Activated CD4-positive, alpha-beta T cell treated with anti-CD3 and anti-CD28 coated beads for 36 hours (primary cell): ENCODE measurements at regions of chr4 and their contacts with region 1.

Region 1: DNA sequence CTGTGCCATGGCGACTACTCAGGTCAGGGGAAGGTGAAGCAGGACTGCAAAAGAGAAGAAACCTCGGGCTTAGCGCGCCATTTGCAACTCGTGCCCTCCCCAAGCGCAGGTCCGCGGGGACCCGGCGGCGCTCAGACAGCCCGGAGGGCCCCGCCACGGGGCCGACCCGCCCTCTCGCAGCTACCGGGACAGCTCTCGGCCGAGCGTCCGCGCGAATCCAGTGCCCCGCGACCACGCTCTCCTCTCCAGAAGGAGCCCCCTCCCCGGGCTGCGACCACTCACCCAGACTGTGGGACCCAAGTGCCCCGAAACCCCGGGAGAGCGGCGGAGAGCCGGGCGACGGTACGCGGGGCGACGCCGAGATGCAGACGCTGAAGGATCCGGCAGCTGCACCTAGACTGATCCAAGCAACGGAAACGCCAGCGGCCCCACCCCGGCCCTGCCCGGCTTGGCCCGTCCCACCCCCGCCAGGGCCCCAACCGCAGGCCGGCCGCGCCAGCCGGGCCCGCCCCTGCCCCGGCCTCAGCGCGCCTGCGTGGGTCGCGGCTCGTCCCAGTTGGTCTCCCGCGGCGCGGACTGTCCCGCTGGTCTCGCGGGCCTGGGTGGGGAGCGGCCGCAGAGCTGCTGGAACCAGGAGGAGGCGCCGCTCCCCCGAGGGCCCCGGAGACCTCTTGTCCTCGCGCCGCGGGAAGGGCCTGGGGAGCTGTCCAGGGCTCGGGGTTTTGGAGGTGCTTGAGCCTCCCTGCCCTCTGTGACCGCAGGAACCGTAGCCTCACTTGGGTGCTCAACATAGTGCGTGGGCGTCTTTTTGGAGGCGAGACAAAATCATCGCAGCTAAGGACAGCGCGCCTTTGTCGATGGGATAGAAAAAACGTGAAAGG is at the start of gene ANXA5:
- DNase-seq: peak; percentile 86
- ATAC-seq: peak; percentile 87
- H3K4me3 Mint-ChIP-seq: peak within 1 kb of the TSS; percentile 95
- H3K27ac Mint-ChIP-seq: peak within 1 kb of the TSS; percentile 99
- H3K4me1 Mint-ChIP-seq: peaks cover 41% of the 10 kb centered on the region
- H3K27me3 Mint-ChIP-seq: peaks cover 26% of the 10 kb centered on the region
- total RNA-seq, gene ANXA5: 105 to 117 TPM

Region 2: DNA sequence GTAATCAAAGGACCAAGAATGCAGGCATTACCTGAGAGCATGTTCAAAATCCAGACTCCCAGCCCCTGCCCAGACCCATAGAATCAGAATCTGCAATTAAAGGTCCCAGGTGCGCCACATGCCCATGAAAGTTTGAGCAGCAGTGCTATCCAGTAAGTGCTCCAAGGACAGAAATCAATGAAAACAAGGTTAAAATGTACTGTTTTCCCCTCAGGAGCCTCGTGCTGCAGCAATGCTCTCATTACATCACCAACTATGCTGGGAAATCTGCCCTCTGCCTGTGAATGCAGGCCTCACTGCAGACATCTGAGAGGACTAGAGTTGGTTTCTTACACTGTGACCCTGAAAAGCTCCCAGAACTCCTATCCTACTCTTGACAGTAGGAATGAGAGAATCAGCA is 21.1 kb before region 1 on chr4:
- CTCF ChIA-PET with region 1: no interaction called
- POLR2A ChIA-PET with region 1: no interaction called
- intact Hi-C with region 1: no loop called
- DNase-seq: no peak
- ATAC-seq: no peak
- H3K4me3 Mint-ChIP-seq: no peak overlapping the region
- H3K27ac Mint-ChIP-seq: no peak overlapping the region
- H3K4me1 Mint-ChIP-seq: no peaks in the 10 kb centered on the region
- H3K27me3 Mint-ChIP-seq: no peaks in the 10 kb centered on the region

Region 3: GRCh38 chr4:121711263-121712000 is 14.6 kb after region 1 on chr4:
- CTCF ChIA-PET with region 1: interaction called, 7 read pairs
- POLR2A ChIA-PET with region 1: no interaction called
- intact Hi-C with region 1: loop called (anchors 1 kb)
- DNase-seq: peak; percentile 74
- ATAC-seq: peak; percentile 40
- H3K4me3 Mint-ChIP-seq: no peak overlapping the region
- H3K27ac Mint-ChIP-seq: no peak overlapping the region
- H3K4me1 Mint-ChIP-seq: peaks cover 29% of the 10 kb centered on the region
- H3K27me3 Mint-ChIP-seq: peaks cover 40% of the 10 kb centered on the region

Region 4: DNA sequence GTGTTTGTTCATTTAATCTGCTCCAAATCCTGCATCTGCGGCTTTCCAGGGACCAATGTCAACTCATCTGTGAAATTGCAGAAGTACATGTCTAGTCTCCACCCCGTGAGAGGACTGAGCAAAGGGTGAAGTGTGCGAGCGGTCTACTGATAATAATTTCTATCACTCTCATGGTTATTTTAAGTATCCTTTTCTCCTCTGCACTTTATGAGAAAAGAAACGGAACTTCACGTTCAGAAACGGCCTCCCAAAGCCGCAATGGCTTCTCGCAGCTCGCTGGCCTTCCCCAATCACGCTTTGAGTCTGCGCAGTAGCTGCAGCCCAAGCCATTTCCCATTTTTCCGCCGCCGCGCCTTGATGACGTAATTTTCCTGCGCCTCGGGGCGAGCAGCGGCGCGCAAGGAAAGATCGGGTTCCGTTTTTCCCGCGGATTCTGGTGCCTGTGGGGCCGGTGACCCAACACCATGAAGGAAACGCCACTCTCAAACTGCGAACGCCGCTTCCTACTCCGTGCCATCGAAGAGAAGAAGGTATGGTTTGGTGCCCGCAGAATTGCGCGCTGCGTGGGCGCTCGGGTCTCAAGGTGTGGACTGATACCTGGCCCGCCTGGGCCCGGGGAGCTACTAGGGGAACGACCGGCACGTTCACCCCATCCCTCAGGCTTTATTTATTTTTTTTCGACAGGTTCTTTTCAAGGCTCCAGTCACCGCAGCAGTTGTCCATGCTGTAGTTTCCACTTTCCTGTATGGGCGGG is 104.3 kb after region 1 on chr4 and contains the start of gene EXOSC9:
- CTCF ChIA-PET with region 1: no interaction called
- POLR2A ChIA-PET with region 1: no interaction called
- intact Hi-C with region 1: loop called (anchors 1 to 2 kb)
- DNase-seq: peak; percentile 95
- ATAC-seq: peak; percentile 85
- H3K4me3 Mint-ChIP-seq: peak within 1 kb of the TSS; percentile 93
- H3K27ac Mint-ChIP-seq: peak within 1 kb of the TSS; percentile 99
- H3K4me1 Mint-ChIP-seq: peaks cover 45% of the 10 kb centered on the region
- H3K27me3 Mint-ChIP-seq: no peaks in the 10 kb centered on the region
- total RNA-seq, gene EXOSC9: 85.4 to 94.5 TPM

Region 5: DNA sequence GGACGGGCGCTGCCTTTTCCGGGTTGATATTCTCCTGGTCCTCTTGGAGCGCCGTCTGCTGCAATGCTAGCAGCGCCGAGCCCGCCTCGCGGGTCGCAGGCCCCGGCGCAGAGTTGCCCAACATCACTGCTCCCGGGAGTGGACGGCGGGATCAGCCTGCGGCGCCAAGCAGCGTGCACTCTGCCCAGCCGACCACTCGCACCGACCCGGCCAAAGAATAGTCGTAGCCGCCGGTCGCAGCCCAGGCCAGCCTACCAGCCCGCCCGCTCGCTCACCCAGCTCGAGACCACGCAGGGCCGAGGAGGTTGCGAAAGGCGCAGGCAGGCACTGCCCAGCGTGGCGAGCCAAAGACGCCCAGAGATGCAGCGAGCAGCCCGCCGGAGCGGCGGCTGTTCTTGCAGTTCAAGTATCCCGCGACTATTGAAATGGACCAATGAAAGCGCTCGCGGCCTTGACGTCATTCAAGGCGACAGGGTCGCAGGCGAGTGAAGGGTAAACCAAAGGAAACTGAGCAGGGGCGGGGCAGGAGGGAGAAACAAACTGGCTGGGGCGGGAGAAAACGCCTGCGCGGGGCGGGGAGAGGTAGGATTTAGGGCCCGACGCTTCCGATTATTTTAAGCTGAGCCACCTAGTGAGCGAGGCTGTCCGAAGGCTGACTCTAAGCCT is 126.8 kb after region 1 on chr4 and contains the start of gene CCNA2:
- CTCF ChIA-PET with region 1: no interaction called
- POLR2A ChIA-PET with region 1: interaction called, 3 read pairs
- intact Hi-C with region 1: loop called (anchors 1 to 5 kb)
- DNase-seq: peak; percentile 98
- ATAC-seq: peak; percentile 97
- H3K4me3 Mint-ChIP-seq: peak within 1 kb of the TSS; percentile 97
- H3K27ac Mint-ChIP-seq: peak within 1 kb of the TSS; percentile 88
- H3K4me1 Mint-ChIP-seq: peaks cover 16% of the 10 kb centered on the region
- H3K27me3 Mint-ChIP-seq: no peaks in the 10 kb centered on the region
- total RNA-seq, gene CCNA2: 113 to 118 TPM

Region 6: DNA sequence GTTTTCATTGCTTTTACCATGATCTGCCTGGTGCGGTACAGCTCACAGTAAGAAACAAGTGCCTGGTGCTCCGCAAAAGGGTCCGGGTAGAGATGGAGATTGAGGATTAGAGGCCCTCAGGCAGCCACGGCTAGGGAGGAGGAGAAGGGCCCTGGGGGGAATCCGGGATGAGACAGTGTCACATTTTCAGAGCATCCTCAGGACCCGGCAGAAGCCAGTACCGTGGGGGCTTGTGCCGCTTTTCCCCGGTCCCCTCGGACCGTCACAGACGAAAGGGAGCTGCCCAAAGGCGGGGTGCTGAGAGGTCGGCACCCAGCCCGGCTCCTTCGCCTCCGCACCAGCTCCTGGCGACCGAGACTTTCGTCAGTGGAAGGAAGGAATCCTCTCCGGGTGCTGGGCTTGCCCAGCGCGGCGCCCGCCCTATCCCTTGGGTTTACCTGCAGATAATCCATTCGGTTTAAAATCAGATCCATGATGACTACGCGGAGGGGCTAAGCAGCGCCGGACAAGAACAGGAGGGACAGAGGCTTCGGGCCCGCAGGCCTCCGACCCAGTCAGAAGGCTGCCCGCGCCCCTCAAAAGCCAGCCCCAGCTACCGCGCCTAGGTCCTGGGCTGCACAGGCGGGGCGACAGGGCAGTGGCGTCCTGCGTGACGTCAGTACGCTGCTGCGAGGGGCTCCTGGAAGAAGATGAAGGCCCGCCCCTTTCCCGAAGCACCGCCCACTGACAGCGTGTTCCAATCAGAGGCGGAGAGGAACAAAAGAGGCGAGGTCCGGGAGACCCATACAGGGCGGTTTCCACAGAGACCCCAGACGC is 173.2 kb after region 1 on chr4 and contains the start of gene BBS7:
- CTCF ChIA-PET with region 1: no interaction called
- POLR2A ChIA-PET with region 1: no interaction called
- intact Hi-C with region 1: loop called in 1 of 2 experiments (anchors 2 kb)
- DNase-seq: peak; percentile 98
- ATAC-seq: peak; percentile 99
- H3K4me3 Mint-ChIP-seq: peak within 1 kb of the TSS; percentile 91
- H3K27ac Mint-ChIP-seq: peak within 1 kb of the TSS; percentile 83
- H3K4me1 Mint-ChIP-seq: peaks cover 17% of the 10 kb centered on the region
- H3K27me3 Mint-ChIP-seq: peaks cover 6% of the 10 kb centered on the region
- total RNA-seq, gene BBS7: 15.0 to 16.3 TPM